ENCODE measurements at regions of chr9 and their contacts with region 1.

Region 1: GRCh38 chr9:92764988-92765936 is 629 bp upstream of the BICD2 start:
- DNase-seq: peak; percentile 94 to 99 (median 98)
- ATAC-seq: peak; percentile 94
- H3K4me3 ChIP-seq: peak overlapping the region; percentile 68
- H3K4me3 Mint-ChIP-seq: peak overlapping the region; percentile 79 to 96 (median 88)
- H3K27ac ChIP-seq: peak overlapping the region; percentile 98
- H3K27ac Mint-ChIP-seq: peak overlapping the region; percentile 87 to 98 (median 98)
- H3K4me1 ChIP-seq: peaks cover 32 to 33% of the 10 kb centered on the region in 2 donors
- H3K4me1 Mint-ChIP-seq: peaks cover 37 to 65% (median 55%) of the 10 kb centered on the region in 7 donors
- H3K27me3 ChIP-seq: no peaks in the 10 kb centered on the region
- H3K27me3 Mint-ChIP-seq: no peaks in the 10 kb centered on the region

Region 2: DNA sequence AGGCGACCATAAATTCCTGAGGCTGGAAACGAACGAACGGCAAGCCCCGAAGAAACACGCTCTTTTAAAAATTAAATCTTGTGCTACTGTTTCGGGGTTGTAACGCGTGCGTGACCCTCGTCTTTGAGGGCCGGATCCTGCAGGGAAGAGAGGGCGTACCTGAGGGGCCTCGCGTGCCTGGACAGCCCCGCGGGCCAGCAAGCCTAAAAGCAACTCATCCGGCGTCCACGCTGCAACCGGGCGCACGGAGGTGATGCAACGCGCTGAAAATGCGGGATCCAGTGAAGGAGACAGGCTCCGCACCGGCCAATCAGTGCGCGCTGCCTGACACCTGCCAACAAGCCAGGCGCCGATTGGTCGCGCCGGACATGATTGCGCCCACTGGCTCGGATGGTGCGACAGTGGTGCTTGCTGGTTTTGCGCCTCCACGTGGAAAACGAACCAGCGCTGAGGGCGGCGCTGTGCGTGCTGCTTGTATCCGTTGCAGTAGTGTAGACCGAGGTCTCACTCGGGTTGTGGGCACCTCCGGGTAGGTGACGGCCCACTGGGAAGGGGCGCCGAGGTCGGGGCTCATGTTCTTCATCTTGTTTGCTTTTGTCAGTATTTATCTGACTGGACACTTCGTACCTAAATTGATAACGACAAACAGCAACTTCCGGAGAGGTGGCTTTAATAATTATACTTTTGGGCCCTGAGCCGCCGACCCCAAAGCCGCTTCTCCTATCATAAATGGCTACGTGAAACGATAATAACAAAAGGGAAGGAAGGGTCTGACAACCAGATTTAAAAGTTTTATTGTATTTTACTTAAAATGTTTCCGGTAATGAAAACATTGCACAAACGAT is 471.6 kb before region 1 on chr9 and contains the start of gene IARS1:
- CTCF ChIA-PET with region 1: no interaction called
- POLR2A ChIA-PET with region 1: no interaction called
- intact Hi-C with region 1: loop called (anchors 1 kb)
- DNase-seq: peak; percentile 97 to 100 (median 100)
- ATAC-seq: peak; percentile 98
- H3K4me3 ChIP-seq: peak within 1 kb of the TSS; percentile 61
- H3K4me3 Mint-ChIP-seq: peak within 1 kb of the TSS; percentile 85 to 99 (median 98)
- H3K27ac ChIP-seq: peak within 1 kb of the TSS; percentile 78
- H3K27ac Mint-ChIP-seq: peak within 1 kb of the TSS; percentile 95 to 100 (median 98)
- H3K4me1 ChIP-seq: peaks cover 17 to 33% of the 10 kb centered on the region in 2 donors
- H3K4me1 Mint-ChIP-seq: peaks cover 23 to 68% (median 62%) of the 10 kb centered on the region in 7 donors
- H3K27me3 ChIP-seq: no peaks in the 10 kb centered on the region
- H3K27me3 Mint-ChIP-seq: no peaks in the 10 kb centered on the region
- total RNA-seq, gene IARS1: 52.4 to 145 (median 97.7) TPM

Region 3: DNA sequence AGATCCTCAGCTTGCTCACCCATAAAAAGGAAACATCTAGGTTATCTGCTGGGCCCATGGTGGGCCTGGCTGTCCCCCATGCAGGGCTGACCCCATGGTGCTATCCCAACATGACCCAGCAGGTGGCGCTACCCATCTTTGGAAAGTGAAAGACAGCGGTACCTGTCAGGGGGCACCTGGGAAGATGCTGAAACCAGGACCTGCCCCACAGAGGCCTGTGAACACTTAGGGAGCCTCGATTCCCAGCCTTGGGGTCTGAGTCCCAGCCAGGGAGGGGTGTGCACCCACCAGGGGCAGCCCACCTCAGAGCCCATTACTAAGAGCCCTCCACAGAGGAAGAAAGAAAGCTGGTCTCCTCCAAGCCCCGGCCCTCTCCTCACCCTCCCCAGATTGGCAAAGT is 48.7 kb before region 1 on chr9:
- CTCF ChIA-PET with region 1: interaction called, 7 read pairs
- POLR2A ChIA-PET with region 1: interaction called, 6 read pairs
- intact Hi-C with region 1: loop called (anchors 1 kb)
- DNase-seq: peak; percentile 53 to 84 (median 70)
- ATAC-seq: peak; percentile 86
- H3K4me3 ChIP-seq: no peak overlapping the region
- H3K4me3 Mint-ChIP-seq: no peak overlapping the region
- H3K27ac ChIP-seq: no peak overlapping the region
- H3K27ac Mint-ChIP-seq: peak overlapping the region in 5 of 9 donors; percentile 1 to 53 (median 36)
- H3K4me1 ChIP-seq: peaks cover 9 to 14% of the 10 kb centered on the region in 2 donors
- H3K4me1 Mint-ChIP-seq: peaks cover 9 to 21% (median 16%) of the 10 kb centered on the region in 7 donors
- H3K27me3 ChIP-seq: no peaks in the 10 kb centered on the region
- H3K27me3 Mint-ChIP-seq: no peaks in the 10 kb centered on the region

Region 4: GRCh38 chr9:92808726-92809451 is 43.6 kb after region 1 on chr9:
- CTCF ChIA-PET with region 1: no interaction called
- POLR2A ChIA-PET with region 1: no interaction called
- intact Hi-C with region 1: loop called (anchors 1 to 2 kb)
- DNase-seq: peak; percentile 16 to 72 (median 44)
- ATAC-seq: peak; percentile 66
- H3K4me3 ChIP-seq: peak overlapping the region; percentile 57
- H3K4me3 Mint-ChIP-seq: peak overlapping the region; percentile 71 to 89 (median 86)
- H3K27ac ChIP-seq: no peak overlapping the region
- H3K27ac Mint-ChIP-seq: peak overlapping the region in 2 of 9 donors; percentile 36 to 58
- H3K4me1 ChIP-seq: peaks cover 6% of the 10 kb centered on the region in 2 donors
- H3K4me1 Mint-ChIP-seq: peaks cover 7 to 28% (median 10%) of the 10 kb centered on the region in 7 donors
- H3K27me3 ChIP-seq: peaks cover 23 to 36% of the 10 kb centered on the region in 2 donors
- H3K27me3 Mint-ChIP-seq: peaks cover 54 to 64% (median 60%) of the 10 kb centered on the region in 5 donors

Region 5: GRCh38 chr9:92954049-92954861 is 189.0 kb after region 1 on chr9:
- CTCF ChIA-PET with region 1: no interaction called
- POLR2A ChIA-PET with region 1: interaction called, 3 read pairs
- intact Hi-C with region 1: loop called in 1 of 2 experiments (anchors 2 kb)
- DNase-seq: peak in 8 of 9 donors; percentile 67 to 92 (median 90)
- ATAC-seq: peak; percentile 93
- H3K4me3 ChIP-seq: peak overlapping the region; percentile 55
- H3K4me3 Mint-ChIP-seq: peak overlapping the region; percentile 79 to 99 (median 86)
- H3K27ac ChIP-seq: peak overlapping the region; percentile 84
- H3K27ac Mint-ChIP-seq: peak overlapping the region; percentile 91 to 100 (median 98)
- H3K4me1 ChIP-seq: peaks cover 52 to 88% of the 10 kb centered on the region in 2 donors
- H3K4me1 Mint-ChIP-seq: peaks cover 58 to 92% (median 84%) of the 10 kb centered on the region in 7 donors
- H3K27me3 ChIP-seq: no peaks in the 10 kb centered on the region
- H3K27me3 Mint-ChIP-seq: peaks cover 0 to 2% (median 0%) of the 10 kb centered on the region in 5 donors

Region 6: DNA sequence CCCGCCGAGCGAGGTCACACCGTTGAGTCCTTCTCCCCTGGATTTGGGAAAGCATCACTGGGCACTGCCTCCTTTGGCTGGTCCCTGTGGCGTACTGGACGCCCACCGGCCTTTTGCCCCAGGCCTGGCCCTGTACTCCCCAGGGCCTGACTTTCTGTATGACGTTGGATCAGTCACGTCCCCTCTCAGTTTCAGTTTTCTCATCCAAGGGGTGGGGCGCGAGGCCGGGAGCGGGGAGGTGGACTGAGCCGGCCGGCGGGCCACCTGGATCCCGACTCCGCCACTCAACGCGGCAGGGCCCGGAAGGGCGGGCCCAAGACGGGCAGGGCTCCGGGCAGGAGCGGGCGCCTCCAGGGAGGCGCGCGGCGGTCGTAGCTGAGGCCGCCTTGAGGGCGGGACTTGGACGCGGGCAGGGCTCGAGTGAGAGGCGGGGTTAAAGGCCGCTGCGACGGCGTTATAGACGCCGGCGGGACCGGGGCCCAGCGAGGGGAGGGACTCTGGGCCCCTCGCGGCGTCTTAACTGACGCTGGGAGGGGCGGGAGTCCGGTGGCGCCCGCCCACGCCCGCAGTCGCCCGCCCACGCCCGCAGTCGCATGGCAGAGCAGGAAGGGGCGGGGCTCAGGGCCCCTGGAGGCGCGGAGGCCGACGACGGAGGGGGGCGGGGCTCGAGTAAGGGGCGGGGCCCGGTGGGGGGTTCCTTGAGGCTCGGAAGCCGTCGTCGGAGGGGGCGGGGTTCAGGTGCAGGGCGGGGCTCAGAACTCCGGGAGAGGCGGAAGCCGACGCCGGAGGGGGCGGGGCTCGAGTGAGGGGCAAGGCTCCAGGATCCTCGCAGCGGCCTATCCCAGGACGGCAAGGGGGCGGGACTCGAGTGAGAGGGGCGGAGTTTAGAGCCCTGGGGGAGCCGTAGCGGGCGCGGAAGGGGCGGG is 330.2 kb after region 1 on chr9:
- CTCF ChIA-PET with region 1: no interaction called
- POLR2A ChIA-PET with region 1: no interaction called
- intact Hi-C with region 1: loop called (anchors 1 kb)
- DNase-seq: peak; percentile 99 to 100 (median 100)
- ATAC-seq: peak; percentile 88
- H3K4me3 ChIP-seq: peak overlapping the region; percentile 72
- H3K4me3 Mint-ChIP-seq: peak overlapping the region; percentile 83 to 95 (median 90)
- H3K27ac ChIP-seq: peak overlapping the region; percentile 93
- H3K27ac Mint-ChIP-seq: peak overlapping the region; percentile 93 to 99 (median 96)
- H3K4me1 ChIP-seq: peaks cover 41 to 58% of the 10 kb centered on the region in 2 donors
- H3K4me1 Mint-ChIP-seq: peaks cover 49 to 81% (median 71%) of the 10 kb centered on the region in 7 donors
- H3K27me3 ChIP-seq: no peaks in the 10 kb centered on the region
- H3K27me3 Mint-ChIP-seq: no peaks in the 10 kb centered on the region

Region 7: DNA sequence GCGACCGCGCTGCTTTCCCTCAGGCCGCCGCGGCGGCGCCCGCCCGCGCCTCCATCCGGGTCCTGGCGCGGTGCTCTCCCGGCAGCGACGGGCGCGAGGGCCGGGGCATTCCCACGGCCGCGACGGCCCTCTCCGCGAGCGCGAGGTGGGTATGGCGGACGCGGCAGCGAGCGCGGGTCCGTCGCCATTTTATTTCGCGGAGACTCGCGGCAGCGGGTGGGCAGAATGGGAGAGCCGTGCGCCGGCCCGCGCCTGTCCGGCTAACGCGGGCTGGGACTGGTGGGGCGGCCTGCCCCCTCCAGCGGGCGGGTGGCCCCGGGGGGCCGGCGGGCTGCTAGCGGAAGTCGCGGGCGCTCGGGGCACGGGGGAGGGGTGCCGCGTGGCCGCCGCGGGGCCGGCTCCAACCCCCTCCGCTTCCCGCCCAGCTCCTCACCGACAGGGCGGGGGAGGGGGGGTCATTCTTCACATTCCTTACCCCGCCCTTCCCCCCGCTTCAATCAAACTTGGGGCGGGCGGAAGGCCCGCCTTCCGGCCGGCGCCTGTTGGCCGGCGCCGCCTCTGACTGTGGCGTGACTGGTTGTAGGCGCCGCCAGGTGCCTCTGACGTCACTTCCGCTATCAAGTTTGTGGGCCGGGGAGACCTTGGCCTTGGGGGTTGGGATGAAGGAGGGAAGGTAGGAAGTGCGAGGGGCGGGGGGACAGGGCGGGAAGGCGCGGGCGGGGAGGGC is 1401.1 kb after region 1 on chr9:
- CTCF ChIA-PET with region 1: no interaction called
- POLR2A ChIA-PET with region 1: no interaction called
- intact Hi-C with region 1: loop called (anchors 1 to 10 kb)
- DNase-seq: peak; percentile 81 to 96 (median 92)
- ATAC-seq: peak; percentile 72
- H3K4me3 ChIP-seq: peak overlapping the region; percentile 82
- H3K4me3 Mint-ChIP-seq: peak overlapping the region; percentile 84 to 96 (median 88)
- H3K27ac ChIP-seq: peak overlapping the region; percentile 100
- H3K27ac Mint-ChIP-seq: peak overlapping the region; percentile 79 to 97 (median 91)
- H3K4me1 ChIP-seq: peaks cover 37 to 38% of the 10 kb centered on the region in 2 donors
- H3K4me1 Mint-ChIP-seq: peaks cover 33 to 61% (median 58%) of the 10 kb centered on the region in 7 donors
- H3K27me3 ChIP-seq: no peaks in the 10 kb centered on the region
- H3K27me3 Mint-ChIP-seq: no peaks in the 10 kb centered on the region